PC-3 (cell line): ENCODE measurements at regions of chrX and their contacts with region 1.

Region 1: GRCh38 chrX:8845060-8845459 is 43.9 kb upstream of the FAM9A start:
- DNase-seq: peak; percentile 87
- ATAC-seq: peak; percentile 44
- H3K4me3 ChIP-seq: no peak overlapping the region
- H3K27ac ChIP-seq: peak overlapping the region; percentile 81
- H3K4me1 ChIP-seq: peaks cover 61% of the 10 kb centered on the region
- H3K27me3 ChIP-seq: no peaks in the 10 kb centered on the region
- CTCF ChIP-seq: peak; percentile 43

Region 2: GRCh38 chrX:8823698-8824097 is 21.4 kb before region 1 on chrX:
- CTCF ChIA-PET with region 1: interaction called, 4 read pairs
- POLR2A ChIA-PET with region 1: no interaction called
- intact Hi-C with region 1: loop called (anchors 2 kb)
- DNase-seq: no peak
- ATAC-seq: no peak
- H3K4me3 ChIP-seq: no peak overlapping the region
- H3K27ac ChIP-seq: no peak overlapping the region
- H3K4me1 ChIP-seq: no peaks in the 10 kb centered on the region
- H3K27me3 ChIP-seq: no peaks in the 10 kb centered on the region
- CTCF ChIP-seq: no peak

Region 3: DNA sequence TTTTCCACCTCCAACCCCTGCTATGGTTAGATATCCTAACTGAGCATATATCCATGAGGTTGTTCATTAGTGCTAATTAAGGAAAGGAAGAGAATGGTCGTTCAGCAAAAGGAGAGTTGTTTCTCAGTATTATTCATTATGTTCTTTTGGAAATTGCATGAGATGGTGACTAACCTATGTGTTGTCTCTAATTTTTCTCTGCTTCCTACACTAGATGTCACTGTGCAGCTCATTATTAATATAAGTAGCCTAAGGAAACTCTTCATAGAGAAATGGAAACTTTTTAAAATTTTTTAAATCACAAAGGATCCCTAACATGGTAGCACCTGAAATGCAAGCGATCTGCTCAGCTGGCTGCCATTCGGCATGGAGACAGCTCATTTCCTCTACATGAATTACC is 23.8 kb after region 1 on chrX:
- CTCF ChIA-PET with region 1: interaction called, 9 read pairs
- POLR2A ChIA-PET with region 1: interaction called, 5 read pairs
- intact Hi-C with region 1: loop called (anchors 2 kb)
- DNase-seq: peak; percentile 57
- ATAC-seq: peak; percentile 70
- H3K4me3 ChIP-seq: peak overlapping the region; percentile 57
- H3K27ac ChIP-seq: peak overlapping the region; percentile 100
- H3K4me1 ChIP-seq: peaks cover 44% of the 10 kb centered on the region
- H3K27me3 ChIP-seq: no peaks in the 10 kb centered on the region
- CTCF ChIP-seq: peak; percentile 64

Region 4: GRCh38 chrX:9071031-9071650 is 226.1 kb after region 1 on chrX:
- CTCF ChIA-PET with region 1: no interaction called
- POLR2A ChIA-PET with region 1: no interaction called
- intact Hi-C with region 1: loop called (anchors 10 kb)
- DNase-seq: peak; percentile 82
- ATAC-seq: peak; percentile 90
- H3K4me3 ChIP-seq: no peak overlapping the region
- H3K27ac ChIP-seq: peak overlapping the region; percentile 91
- H3K4me1 ChIP-seq: peaks cover 16% of the 10 kb centered on the region
- H3K27me3 ChIP-seq: no peaks in the 10 kb centered on the region
- CTCF ChIP-seq: no peak